ENCODE measurements at regions of chr3 and their contacts with region 1.

Region 1: GRCh38 chr3:171374661-171375285 is 85.4 kb downstream of the TNIK start:
- DNase-seq: no peak
- ATAC-seq: peak in 2 of 8 donors; percentile 21 to 31
- H3K4me3 ChIP-seq: no peak overlapping the region
- H3K27ac ChIP-seq: peak overlapping the region in 1 of 10 donors; percentile 82
- H3K4me1 ChIP-seq: peaks cover 0 to 55% (median 33%) of the 10 kb centered on the region in 9 donors
- H3K27me3 ChIP-seq: no peaks in the 10 kb centered on the region
- CTCF ChIP-seq: no peak

Region 2: GRCh38 chr3:171339598-171339997 is 35.2 kb before region 1 on chr3:
- intact Hi-C with region 1: loop called in 1 of 10 experiments (anchors 5 kb)
- DNase-seq: no peak
- ATAC-seq: no peak
- H3K4me3 ChIP-seq: no peak overlapping the region
- H3K27ac ChIP-seq: no peak overlapping the region
- H3K4me1 ChIP-seq: peaks cover 0 to 30% (median 7%) of the 10 kb centered on the region in 9 donors
- H3K27me3 ChIP-seq: no peaks in the 10 kb centered on the region
- CTCF ChIP-seq: no peak